ENCODE measurements at regions of chr10 and their contacts with region 1.

Region 1: GRCh38 chr10:511101-511848 is 178.2 kb downstream of the DIP2C start:
- ATAC-seq: peak; percentile 85 to 99 (median 97)
- H3K4me3 ChIP-seq: no peak overlapping the region
- H3K27ac ChIP-seq: peak overlapping the region; percentile 8 to 50
- H3K4me1 ChIP-seq: peaks cover 23% of the 10 kb centered on the region in 2 donors

Region 2: GRCh38 chr10:373522-374309 is 137.6 kb before region 1 on chr10:
- in situ Hi-C with region 1: no loop called
- ATAC-seq: peak in 4 of 8 experiments; percentile 7 to 57 (median 26)
- H3K4me3 ChIP-seq: no peak overlapping the region
- H3K27ac ChIP-seq: peak overlapping the region in 1 of 2 donors; percentile 66
- H3K4me1 ChIP-seq: peaks cover 2 to 7% of the 10 kb centered on the region in 2 donors

Region 3: GRCh38 chr10:593901-594457 is 82.7 kb after region 1 on chr10:
- in situ Hi-C with region 1: no loop called
- ATAC-seq: peak in 2 of 8 experiments; percentile 33 to 48
- H3K4me3 ChIP-seq: no peak overlapping the region
- H3K27ac ChIP-seq: no peak overlapping the region
- H3K4me1 ChIP-seq: peaks cover 23 to 28% of the 10 kb centered on the region in 2 donors

Region 4: GRCh38 chr10:624605-625332 is 113.5 kb after region 1 on chr10:
- in situ Hi-C with region 1: loop called in 1 of 9 experiments (anchors 25 kb)
- ATAC-seq: peak; percentile 76 to 90 (median 80)
- H3K4me3 ChIP-seq: peak overlapping the region in 1 of 5 donors; percentile 17
- H3K27ac ChIP-seq: peak overlapping the region; percentile 83 to 92
- H3K4me1 ChIP-seq: peaks cover 54 to 56% of the 10 kb centered on the region in 2 donors

Region 5: GRCh38 chr10:689433-690371 is 178.4 kb after region 1 on chr10 and contains the start of gene DIP2C:
- in situ Hi-C with region 1: loop called in 2 of 9 experiments (anchors 25 kb)
- ATAC-seq: peak; percentile 75 to 93 (median 88)
- H3K4me3 ChIP-seq: peak within 1 kb of the TSS; percentile 86 to 97 (median 94)
- H3K27ac ChIP-seq: peak within 1 kb of the TSS; percentile 93 to 95
- H3K4me1 ChIP-seq: peaks cover 19 to 22% of the 10 kb centered on the region in 2 donors
- total RNA-seq, gene DIP2C: 1.9 to 26.3 (median 19.8) TPM

Region 6: DNA sequence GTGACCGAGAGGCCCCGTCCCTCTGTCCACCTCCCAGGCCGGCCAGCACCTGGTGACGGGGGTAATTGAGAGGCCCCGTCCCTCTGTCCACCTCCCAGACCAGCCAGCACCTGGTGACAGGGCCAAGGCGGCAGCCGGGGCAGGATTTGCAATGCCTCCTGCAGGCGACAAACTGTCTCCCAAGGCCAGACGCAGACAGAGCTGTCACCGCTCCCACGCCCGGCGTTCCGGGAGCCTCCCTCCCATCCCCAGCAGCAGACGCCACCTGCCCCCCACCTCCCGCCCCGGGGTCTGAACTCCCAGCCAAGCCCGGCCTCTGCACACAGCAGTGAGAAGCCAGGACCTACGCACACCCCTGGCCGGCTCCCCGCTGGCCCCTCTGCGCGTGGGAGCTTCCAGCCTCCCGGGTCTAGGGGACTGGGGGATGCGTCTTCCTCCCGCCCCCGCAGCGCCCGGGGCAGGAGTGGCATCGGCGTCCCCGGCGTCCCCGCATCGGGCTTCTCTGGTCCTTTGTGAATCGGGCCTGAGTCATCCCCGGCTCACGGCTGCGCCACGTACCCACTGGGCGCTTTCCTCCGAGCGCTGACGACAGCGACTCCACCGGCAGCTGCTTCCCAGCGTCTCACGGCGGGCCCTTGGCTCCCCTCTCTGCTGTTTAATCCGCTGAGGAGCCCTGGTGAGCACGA is 273.3 kb after region 1 on chr10:
- in situ Hi-C with region 1: loop called in 1 of 9 experiments (anchors 25 kb)
- ATAC-seq: peak; percentile 66 to 90 (median 88)
- H3K4me3 ChIP-seq: peak overlapping the region; percentile 10 to 32 (median 18)
- H3K27ac ChIP-seq: peak overlapping the region in 1 of 2 donors; percentile 70
- H3K4me1 ChIP-seq: peaks cover 14% of the 10 kb centered on the region in 2 donors

Region 7: GRCh38 chr10:794466-794865 is 283.2 kb after region 1 on chr10:
- in situ Hi-C with region 1: loop called in 2 of 9 experiments (anchors 5 to 25 kb)
- ATAC-seq: peak in 5 of 8 experiments; percentile 28 to 84 (median 67)
- H3K4me3 ChIP-seq: no peak overlapping the region
- H3K27ac ChIP-seq: no peak overlapping the region
- H3K4me1 ChIP-seq: peaks cover 0 to 3% of the 10 kb centered on the region in 2 donors

Region 8: DNA sequence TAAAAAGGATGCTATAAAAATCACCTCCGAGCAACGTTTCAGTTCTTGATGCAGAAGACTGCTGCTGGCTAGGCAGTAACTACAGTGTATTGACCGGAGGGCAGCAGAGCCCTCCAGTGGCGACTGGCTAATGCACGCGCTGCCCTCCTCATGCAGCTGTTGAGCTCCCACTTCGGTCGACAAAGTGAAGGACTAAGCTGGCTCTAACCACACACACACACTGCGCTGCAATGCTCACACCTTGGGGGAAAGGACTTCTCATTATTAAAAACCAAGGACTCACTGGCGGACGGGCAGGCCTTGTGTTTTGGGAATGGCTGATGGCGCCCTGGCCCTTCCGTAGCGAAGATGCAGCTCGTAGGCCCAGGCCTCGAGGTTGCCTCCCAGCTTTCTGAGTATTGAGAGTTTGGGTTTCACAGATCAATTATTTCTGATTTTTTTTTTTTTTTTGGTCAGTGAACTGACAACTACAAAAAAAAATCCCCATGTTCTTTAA is 299.1 kb after region 1 on chr10:
- in situ Hi-C with region 1: loop called in 2 of 9 experiments (anchors 25 kb)
- ATAC-seq: peak in 6 of 8 experiments; percentile 60 to 83 (median 72)
- H3K4me3 ChIP-seq: no peak overlapping the region
- H3K27ac ChIP-seq: no peak overlapping the region
- H3K4me1 ChIP-seq: no peaks in the 10 kb centered on the region